ENCODE measurements at regions of chr18 and their contacts with region 1.

Region 1: GRCh38 chr18:35386600-35387351 is 9.6 kb upstream of the ZNF396 start:
- DNase-seq: peak; percentile 69
- H3K4me3 Mint-ChIP-seq: no peak overlapping the region
- H3K27ac Mint-ChIP-seq: no peak overlapping the region
- H3K4me1 Mint-ChIP-seq: peaks cover 2% of the 10 kb centered on the region
- H3K27me3 Mint-ChIP-seq: peaks cover 16% of the 10 kb centered on the region

Region 2: DNA sequence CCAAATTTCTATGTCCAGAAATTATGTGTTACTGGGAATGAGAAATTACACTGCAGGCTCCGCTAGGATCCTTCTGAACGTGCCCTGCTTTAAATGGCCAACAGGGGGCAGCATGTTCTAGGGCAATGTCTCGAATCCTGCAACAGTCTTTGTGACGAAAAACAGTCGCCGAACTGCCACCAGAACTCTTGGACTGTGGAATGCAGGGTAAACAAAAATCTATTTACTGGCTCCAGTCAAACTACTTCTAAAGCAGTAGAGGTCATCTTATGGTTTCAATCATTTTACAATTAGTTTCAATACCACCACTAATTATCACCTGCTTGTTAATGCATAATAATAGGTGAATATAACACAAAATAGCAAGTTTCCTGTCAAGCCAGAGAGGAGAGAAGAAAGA is 155.7 kb before region 1 on chr18:
- CTCF ChIA-PET with region 1: interaction called, 41 read pairs
- POLR2A ChIA-PET with region 1: no interaction called
- intact Hi-C with region 1: loop called (anchors 1 kb)
- DNase-seq: peak; percentile 83
- H3K4me3 Mint-ChIP-seq: peak overlapping the region; percentile 31
- H3K27ac Mint-ChIP-seq: no peak overlapping the region
- H3K4me1 Mint-ChIP-seq: peaks cover 3% of the 10 kb centered on the region
- H3K27me3 Mint-ChIP-seq: peaks cover 3% of the 10 kb centered on the region

Region 3: GRCh38 chr18:35355140-35355618 is 31.6 kb before region 1 on chr18:
- CTCF ChIA-PET with region 1: interaction called, 13 read pairs
- POLR2A ChIA-PET with region 1: interaction called, 4 read pairs
- intact Hi-C with region 1: no loop called
- DNase-seq: peak; percentile 71
- H3K4me3 Mint-ChIP-seq: no peak overlapping the region
- H3K27ac Mint-ChIP-seq: no peak overlapping the region
- H3K4me1 Mint-ChIP-seq: peaks cover 5% of the 10 kb centered on the region
- H3K27me3 Mint-ChIP-seq: no peaks in the 10 kb centered on the region

Region 4: GRCh38 chr18:35489913-35490490 is 103.2 kb after region 1 on chr18:
- CTCF ChIA-PET with region 1: no interaction called
- POLR2A ChIA-PET with region 1: no interaction called
- intact Hi-C with region 1: no loop called
- DNase-seq: no peak
- H3K4me3 Mint-ChIP-seq: no peak overlapping the region
- H3K27ac Mint-ChIP-seq: no peak overlapping the region
- H3K4me1 Mint-ChIP-seq: peaks cover 15% of the 10 kb centered on the region
- H3K27me3 Mint-ChIP-seq: no peaks in the 10 kb centered on the region

Region 5: GRCh38 chr18:35547008-35547605 is 160.3 kb after region 1 on chr18:
- CTCF ChIA-PET with region 1: no interaction called
- POLR2A ChIA-PET with region 1: no interaction called
- intact Hi-C with region 1: no loop called
- DNase-seq: no peak
- H3K4me3 Mint-ChIP-seq: no peak overlapping the region
- H3K27ac Mint-ChIP-seq: no peak overlapping the region
- H3K4me1 Mint-ChIP-seq: no peaks in the 10 kb centered on the region
- H3K27me3 Mint-ChIP-seq: peaks cover 5% of the 10 kb centered on the region